ENCODE measurements at regions of chr6 and their contacts with region 1.

Region 1: DNA sequence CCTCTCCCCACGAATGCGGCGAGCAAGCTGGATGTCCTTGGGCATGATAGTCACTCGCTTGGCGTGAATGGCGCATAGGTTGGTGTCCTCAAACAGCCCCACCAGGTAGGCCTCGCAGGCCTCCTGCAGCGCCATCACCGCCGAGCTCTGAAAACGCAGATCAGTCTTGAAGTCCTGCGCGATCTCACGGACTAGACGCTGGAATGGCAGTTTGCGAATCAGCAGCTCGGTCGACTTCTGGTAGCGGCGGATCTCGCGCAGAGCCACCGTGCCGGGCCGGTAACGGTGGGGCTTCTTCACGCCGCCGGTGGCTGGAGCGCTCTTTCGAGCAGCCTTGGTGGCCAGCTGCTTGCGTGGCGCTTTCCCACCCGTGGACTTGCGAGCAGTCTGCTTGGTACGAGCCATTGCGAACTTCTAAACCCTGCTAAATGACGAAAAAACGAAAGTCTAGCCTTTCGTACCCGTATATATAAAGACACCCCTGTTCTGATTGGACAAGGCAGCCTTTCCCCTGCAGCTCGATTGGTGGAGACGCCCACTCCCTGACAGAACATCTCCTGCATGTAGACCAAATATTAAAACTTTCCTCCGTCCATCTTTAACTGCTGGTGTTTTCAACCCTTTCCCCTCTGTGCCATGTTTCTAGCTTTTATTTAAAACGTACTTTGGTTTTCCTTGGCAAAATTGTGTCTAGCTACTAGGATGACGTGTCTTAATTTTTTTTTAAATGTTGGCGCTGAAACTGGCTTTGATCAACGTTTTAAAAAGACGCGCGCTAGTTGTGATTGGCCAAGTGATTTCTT is 109.8 kb downstream of the HFE start:
- DNase-seq: peak; percentile 80
- ATAC-seq: peak; percentile 59
- H3K4me3 ChIP-seq: peak overlapping the region; percentile 80 to 85
- H3K27ac ChIP-seq: peak overlapping the region; percentile 97
- H3K4me1 ChIP-seq: peaks cover 27% of the 10 kb centered on the region
- H3K27me3 ChIP-seq: no peaks in the 10 kb centered on the region
- CTCF ChIP-seq: no peak

Region 2: DNA sequence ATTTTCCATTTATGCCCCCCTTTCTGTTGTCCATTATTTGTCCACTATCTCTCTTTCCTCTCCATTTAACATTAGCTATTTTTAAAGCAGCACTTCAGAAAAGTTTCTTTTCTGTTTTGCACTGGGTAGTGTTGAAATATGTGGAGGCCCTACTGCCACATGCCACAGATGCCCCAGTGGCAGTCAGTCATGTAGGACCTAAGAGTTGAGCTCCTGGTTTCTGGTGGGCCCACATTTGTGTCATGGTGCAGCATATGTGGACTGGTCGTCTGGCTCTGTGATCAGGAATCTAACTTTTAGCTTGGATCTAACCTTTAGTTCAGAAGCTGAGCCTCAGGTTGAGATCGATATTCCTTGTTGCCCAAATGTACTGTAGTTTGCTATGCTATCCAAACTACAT is 55.0 kb before region 1 on chr6:
- CTCF ChIA-PET with region 1: no interaction called
- POLR2A ChIA-PET with region 1: interaction called, 13 read pairs
- in situ Hi-C with region 1: no loop called
- intact Hi-C with region 1: no loop called
- DNase-seq: no peak
- ATAC-seq: no peak
- H3K4me3 ChIP-seq: no peak overlapping the region
- H3K27ac ChIP-seq: peak overlapping the region; percentile 23; the same call in 1 of the 2 replicates
- H3K4me1 ChIP-seq: peaks cover 5% of the 10 kb centered on the region; the same call in 1 of the 2 replicates
- H3K27me3 ChIP-seq: no peaks in the 10 kb centered on the region
- CTCF ChIP-seq: no peak

Region 3: DNA sequence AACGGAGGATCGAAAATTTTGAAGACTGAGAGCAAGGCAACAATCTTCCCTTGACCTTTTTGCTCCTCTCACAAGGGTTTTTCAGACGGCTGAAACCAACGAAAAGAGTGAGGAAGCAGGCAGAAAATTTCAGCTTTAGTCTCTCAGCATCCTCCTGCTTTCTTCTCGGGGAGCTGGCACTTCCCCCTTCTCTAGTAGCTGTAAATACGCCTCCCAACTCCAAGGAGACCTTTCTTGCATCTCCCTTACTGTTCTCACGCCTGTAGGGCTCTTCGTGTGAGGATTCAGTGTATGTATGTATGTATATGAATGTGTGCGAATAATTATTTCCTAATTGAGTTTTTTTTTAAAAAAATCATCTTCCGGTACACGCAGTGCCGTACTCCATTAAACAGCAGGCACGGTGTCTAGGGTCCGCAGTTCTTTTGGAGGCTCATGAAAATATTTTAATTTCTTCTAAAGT is 24.5 kb before region 1 on chr6:
- CTCF ChIA-PET with region 1: no interaction called
- POLR2A ChIA-PET with region 1: interaction called, 17 read pairs
- in situ Hi-C with region 1: no loop called
- intact Hi-C with region 1: no loop called
- DNase-seq: no peak
- ATAC-seq: peak; percentile 46
- H3K4me3 ChIP-seq: peak overlapping the region; percentile 74 to 87
- H3K27ac ChIP-seq: peak overlapping the region; percentile 99
- H3K4me1 ChIP-seq: peaks cover 33% of the 10 kb centered on the region
- H3K27me3 ChIP-seq: no peaks in the 10 kb centered on the region
- CTCF ChIP-seq: no peak

Region 4: DNA sequence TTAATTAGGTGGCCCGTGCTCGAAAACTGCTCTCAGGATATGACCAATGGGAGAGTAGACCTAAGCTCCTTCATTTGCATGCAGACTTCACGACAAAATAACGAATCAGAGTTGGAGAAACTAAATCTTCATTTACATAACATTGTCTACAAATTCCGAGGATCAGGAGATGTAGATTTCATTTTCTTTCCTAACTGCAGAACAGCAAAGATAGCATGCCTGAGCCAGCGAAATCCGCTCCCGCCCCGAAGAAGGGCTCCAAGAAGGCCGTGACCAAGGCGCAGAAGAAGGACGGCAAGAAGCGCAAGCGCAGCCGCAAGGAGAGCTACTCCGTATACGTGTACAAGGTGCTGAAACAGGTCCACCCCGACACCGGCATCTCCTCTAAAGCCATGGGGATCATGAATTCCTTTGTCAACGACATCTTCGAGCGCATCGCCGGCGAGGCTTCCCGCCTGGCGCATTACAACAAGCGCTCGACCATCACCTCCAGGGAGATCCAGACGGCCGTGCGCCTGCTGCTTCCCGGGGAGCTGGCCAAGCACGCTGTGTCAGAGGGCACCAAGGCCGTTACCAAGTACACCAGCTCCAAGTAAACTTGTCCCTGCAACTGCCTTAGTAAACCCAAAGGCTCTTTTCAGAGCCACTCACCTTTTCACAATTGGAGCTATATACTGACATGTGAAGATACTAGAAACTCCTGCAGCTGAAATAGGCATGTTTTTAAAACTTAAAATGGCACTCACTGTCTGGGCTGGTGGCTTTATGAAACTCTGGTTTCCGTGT is 13.3 kb before region 1 on chr6:
- CTCF ChIA-PET with region 1: interaction called, 6 read pairs
- POLR2A ChIA-PET with region 1: interaction called, 42 read pairs
- in situ Hi-C with region 1: no loop called
- intact Hi-C with region 1: no loop called
- DNase-seq: peak; percentile 93
- ATAC-seq: peak; percentile 86
- H3K4me3 ChIP-seq: peak overlapping the region; percentile 51 to 66
- H3K27ac ChIP-seq: peak overlapping the region; percentile 95
- H3K4me1 ChIP-seq: peaks cover 30% of the 10 kb centered on the region
- H3K27me3 ChIP-seq: no peaks in the 10 kb centered on the region
- CTCF ChIP-seq: no peak

Region 5: GRCh38 chr6:26285143-26286134 is 88.4 kb after region 1 on chr6:
- CTCF ChIA-PET with region 1: no interaction called
- POLR2A ChIA-PET with region 1: interaction called, 11 read pairs
- in situ Hi-C with region 1: no loop called
- intact Hi-C with region 1: no loop called
- DNase-seq: peak; percentile 100
- ATAC-seq: peak; percentile 89
- H3K4me3 ChIP-seq: peak overlapping the region; percentile 66 to 96
- H3K27ac ChIP-seq: peak overlapping the region; percentile 95
- H3K4me1 ChIP-seq: peaks cover 12% of the 10 kb centered on the region; the same call in 1 of the 2 replicates
- H3K27me3 ChIP-seq: no peaks in the 10 kb centered on the region
- CTCF ChIP-seq: no peak

Measured in Panc1 (cell line).